Tibial artery (tissue), 4 donors: ENCODE measurements at regions of chr11 and their contacts with region 1.

Region 1: GRCh38 chr11:8089791-8090510 is 8.9 kb downstream of the TUB start:
- DNase-seq: peak in 1 of 2 donors; percentile 63
- H3K4me3 ChIP-seq: no peak overlapping the region
- H3K27ac ChIP-seq: no peak overlapping the region
- H3K4me1 ChIP-seq: peaks cover 0 to 4% (median 0%) of the 10 kb centered on the region in 4 donors
- H3K27me3 ChIP-seq: no peaks in the 10 kb centered on the region
- CTCF ChIP-seq: no peak

Region 2: DNA sequence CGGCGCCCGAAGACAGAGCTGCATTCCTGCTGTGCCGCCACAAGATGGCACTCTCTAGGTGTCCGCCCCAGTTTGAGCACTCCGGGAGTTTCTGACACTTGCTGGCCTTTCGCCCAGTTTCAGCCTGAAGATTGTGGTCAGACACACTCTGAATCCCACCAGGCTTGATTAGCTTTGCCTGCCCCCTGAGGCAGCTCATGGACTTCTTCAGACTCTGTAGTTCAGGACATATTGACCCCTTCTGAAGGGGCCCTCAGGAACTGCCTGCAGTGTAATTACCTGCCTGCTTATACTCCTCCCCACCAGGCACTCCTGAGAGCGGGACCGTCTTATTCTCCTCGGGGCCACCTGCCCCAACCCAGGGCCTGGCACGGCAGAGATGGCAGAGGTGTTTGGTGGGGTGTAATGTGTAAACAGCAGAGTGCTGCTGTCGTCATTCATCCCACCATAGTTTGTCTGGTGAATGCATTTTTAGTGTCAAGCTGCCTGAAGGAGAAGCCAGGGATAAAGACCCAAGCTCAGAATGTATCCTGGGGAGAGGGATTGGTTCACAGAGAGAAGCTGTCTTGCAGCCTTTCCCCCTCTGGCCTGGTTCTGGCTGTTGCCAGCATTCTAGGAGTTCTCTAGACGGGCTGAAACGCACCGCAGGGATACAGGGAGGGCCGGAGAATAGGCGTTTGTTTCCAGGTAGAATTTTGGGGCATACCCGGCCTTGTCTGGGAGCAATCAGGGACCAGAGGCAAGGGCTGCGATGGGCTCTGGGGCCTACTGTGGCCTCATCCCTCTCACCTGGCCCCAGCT is 56.4 kb before region 1 on chr11:
- intact Hi-C with region 1: loop called (anchors 2 kb)
- DNase-seq: peak; percentile 78 to 82
- H3K4me3 ChIP-seq: no peak overlapping the region
- H3K27ac ChIP-seq: no peak overlapping the region
- H3K4me1 ChIP-seq: peaks cover 0 to 10% (median 2%) of the 10 kb centered on the region in 4 donors
- H3K27me3 ChIP-seq: peaks cover 0 to 30% of the 10 kb centered on the region in 2 donors
- CTCF ChIP-seq: peak; percentile 82 to 87